ENCODE measurements at regions of chr6 and their contacts with region 1.

Region 1: GRCh38 chr6:139323511-139324300 is 31.9 kb upstream of the TXLNB start:
- DNase-seq: peak; percentile 54 to 90 (median 86)
- ATAC-seq: peak; percentile 90
- H3K4me3 ChIP-seq: peak overlapping the region; percentile 64
- H3K4me3 Mint-ChIP-seq: peak overlapping the region; percentile 80 to 96 (median 90)
- H3K27ac ChIP-seq: peak overlapping the region; percentile 83
- H3K27ac Mint-ChIP-seq: peak overlapping the region; percentile 96 to 100 (median 99)
- H3K4me1 ChIP-seq: peaks cover 12 to 19% of the 10 kb centered on the region in 2 donors
- H3K4me1 Mint-ChIP-seq: peaks cover 19 to 44% (median 32%) of the 10 kb centered on the region in 7 donors
- H3K27me3 ChIP-seq: no peaks in the 10 kb centered on the region
- H3K27me3 Mint-ChIP-seq: no peaks in the 10 kb centered on the region

Region 2: DNA sequence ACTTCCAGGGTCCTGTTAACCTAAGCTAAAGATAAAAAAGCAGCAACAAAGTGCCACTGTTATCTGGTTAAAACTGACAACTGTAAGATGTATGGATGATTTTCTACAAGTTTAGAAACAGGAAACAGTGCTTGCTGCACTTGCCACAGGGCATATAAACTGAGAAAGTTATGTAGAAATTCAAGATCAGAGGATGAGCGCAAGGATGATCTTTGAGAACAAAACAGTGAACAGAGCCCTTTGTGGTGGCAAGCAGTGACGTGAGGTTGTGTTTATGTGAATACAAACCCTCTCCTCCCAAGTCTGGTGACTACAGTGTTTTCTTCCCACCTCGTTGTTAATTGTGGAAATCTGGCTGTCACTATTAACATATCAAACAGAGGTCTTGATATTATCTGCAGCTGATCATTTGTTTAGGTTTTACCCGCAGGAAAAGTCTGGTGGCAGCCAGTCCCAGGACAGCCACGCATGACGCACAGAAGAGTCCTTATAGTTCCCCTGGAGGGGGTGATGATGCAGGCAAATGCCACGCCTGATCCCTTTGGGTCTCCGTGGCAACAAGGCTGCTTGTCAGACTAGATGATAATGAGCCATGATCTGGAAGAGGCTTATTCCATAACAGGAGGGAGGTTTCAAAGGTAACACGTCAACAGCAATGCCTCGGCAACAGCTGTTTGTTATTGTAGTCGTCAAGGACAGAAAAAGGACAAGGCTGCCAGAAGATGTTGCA is 1499.7 kb before region 1 on chr6:
- CTCF ChIA-PET with region 1: no interaction called
- POLR2A ChIA-PET with region 1: no interaction called
- intact Hi-C with region 1: loop called in 1 of 2 experiments (anchors 5 kb)
- DNase-seq: peak; percentile 59 to 100 (median 95)
- ATAC-seq: peak; percentile 87
- H3K4me3 ChIP-seq: peak overlapping the region; percentile 33
- H3K4me3 Mint-ChIP-seq: peak overlapping the region; percentile 72 to 86 (median 79)
- H3K27ac ChIP-seq: peak overlapping the region; percentile 99
- H3K27ac Mint-ChIP-seq: peak overlapping the region; percentile 96 to 100 (median 100)
- H3K4me1 ChIP-seq: peaks cover 43 to 76% of the 10 kb centered on the region in 2 donors
- H3K4me1 Mint-ChIP-seq: peaks cover 48 to 98% (median 93%) of the 10 kb centered on the region in 7 donors
- H3K27me3 ChIP-seq: no peaks in the 10 kb centered on the region
- H3K27me3 Mint-ChIP-seq: no peaks in the 10 kb centered on the region

Region 3: GRCh38 chr6:139161817-139162284 is 161.9 kb before region 1 on chr6:
- CTCF ChIA-PET with region 1: no interaction called
- POLR2A ChIA-PET with region 1: interaction called, 5 read pairs
- intact Hi-C with region 1: loop called in 1 of 2 experiments (anchors 2 kb)
- DNase-seq: peak in 8 of 9 donors; percentile 59 to 78 (median 73)
- ATAC-seq: peak; percentile 64
- H3K4me3 ChIP-seq: peak overlapping the region; percentile 11
- H3K4me3 Mint-ChIP-seq: peak overlapping the region; percentile 79 to 88 (median 83)
- H3K27ac ChIP-seq: peak overlapping the region; percentile 75
- H3K27ac Mint-ChIP-seq: peak overlapping the region; percentile 86 to 98 (median 91)
- H3K4me1 ChIP-seq: peaks cover 81 to 85% of the 10 kb centered on the region in 2 donors
- H3K4me1 Mint-ChIP-seq: peaks cover 70 to 96% (median 86%) of the 10 kb centered on the region in 7 donors
- H3K27me3 ChIP-seq: no peaks in the 10 kb centered on the region
- H3K27me3 Mint-ChIP-seq: no peaks in the 10 kb centered on the region

Region 4: DNA sequence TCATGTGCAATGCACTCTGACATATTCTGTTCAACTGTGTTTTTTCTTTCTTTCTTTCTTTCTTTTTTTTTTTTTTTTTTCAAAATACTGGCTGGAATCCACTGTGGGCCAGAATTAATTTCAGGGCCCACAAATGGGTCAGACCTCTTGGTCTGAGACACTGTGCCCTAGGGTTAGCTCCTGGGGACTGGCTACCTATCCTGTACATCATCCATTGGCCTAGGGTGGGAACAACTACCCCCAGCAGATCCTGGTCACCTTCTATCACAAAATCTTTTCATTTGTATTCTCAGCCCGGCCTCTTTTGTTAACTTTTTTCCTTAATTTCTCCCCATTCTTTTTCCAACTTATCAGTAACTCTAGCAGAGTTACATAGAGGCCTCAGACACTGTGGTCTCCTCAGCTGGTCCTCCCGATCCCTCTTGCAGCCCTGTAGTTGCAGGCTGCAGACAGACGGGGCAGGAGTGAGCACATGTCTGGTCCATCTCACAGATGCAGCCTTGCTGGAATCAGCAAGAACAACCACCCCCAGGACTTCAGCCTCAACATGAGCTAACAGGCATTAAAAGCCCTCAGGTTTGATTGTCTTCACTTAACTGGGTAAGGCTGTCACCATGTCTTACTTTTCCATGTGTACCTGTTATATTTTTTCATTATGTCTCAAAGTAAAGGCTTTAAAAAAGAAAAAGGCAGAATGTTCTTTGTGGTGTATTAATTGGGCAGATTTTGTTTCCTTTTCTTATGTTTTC is 73.2 kb before region 1 on chr6:
- CTCF ChIA-PET with region 1: interaction called, 8 read pairs
- POLR2A ChIA-PET with region 1: no interaction called
- intact Hi-C with region 1: loop called in 1 of 2 experiments (anchors 1 kb)
- DNase-seq: peak; percentile 7 to 45 (median 34)
- ATAC-seq: peak; percentile 90
- H3K4me3 ChIP-seq: no peak overlapping the region
- H3K4me3 Mint-ChIP-seq: peak overlapping the region in 6 of 10 donors; percentile 16 to 85 (median 58)
- H3K27ac ChIP-seq: no peak overlapping the region
- H3K27ac Mint-ChIP-seq: peak overlapping the region; percentile 32 to 97 (median 73)
- H3K4me1 ChIP-seq: peaks cover 21 to 23% of the 10 kb centered on the region in 2 donors
- H3K4me1 Mint-ChIP-seq: peaks cover 23 to 48% (median 46%) of the 10 kb centered on the region in 7 donors
- H3K27me3 ChIP-seq: no peaks in the 10 kb centered on the region
- H3K27me3 Mint-ChIP-seq: no peaks in the 10 kb centered on the region

Region 5: GRCh38 chr6:139308286-139308916 is 15.3 kb before region 1 on chr6:
- CTCF ChIA-PET with region 1: no interaction called
- POLR2A ChIA-PET with region 1: interaction called, 8 read pairs
- intact Hi-C with region 1: loop called in 1 of 2 experiments (anchors 2 kb)
- DNase-seq: no peak
- ATAC-seq: peak; percentile 66
- H3K4me3 ChIP-seq: no peak overlapping the region
- H3K4me3 Mint-ChIP-seq: no peak overlapping the region
- H3K27ac ChIP-seq: no peak overlapping the region
- H3K27ac Mint-ChIP-seq: peak overlapping the region in 1 of 9 donors; percentile 4
- H3K4me1 ChIP-seq: no peaks in the 10 kb centered on the region
- H3K4me1 Mint-ChIP-seq: peaks cover 0 to 19% (median 16%) of the 10 kb centered on the region in 7 donors
- H3K27me3 ChIP-seq: no peaks in the 10 kb centered on the region
- H3K27me3 Mint-ChIP-seq: no peaks in the 10 kb centered on the region